Activated naive CD4-positive, alpha-beta T cell treated with anti-CD3 and anti-CD28 coated beads for 36 hours (primary cell): ENCODE measurements at regions of chr6 and their contacts with region 1.

Region 1: GRCh38 chr6:154352898-154353585 is 3.6 kb downstream of the IPCEF1 start:
- DNase-seq: peak; percentile 83
- H3K4me3 Mint-ChIP-seq: no peak overlapping the region
- H3K27ac Mint-ChIP-seq: no peak overlapping the region
- H3K4me1 Mint-ChIP-seq: peaks cover 38% of the 10 kb centered on the region
- H3K27me3 Mint-ChIP-seq: peaks cover 25% of the 10 kb centered on the region

Region 2: GRCh38 chr6:154266560-154267099 is 86.4 kb before region 1 on chr6:
- CTCF ChIA-PET with region 1: no interaction called
- intact Hi-C with region 1: no loop called
- DNase-seq: no peak
- H3K4me3 Mint-ChIP-seq: no peak overlapping the region
- H3K27ac Mint-ChIP-seq: no peak overlapping the region
- H3K4me1 Mint-ChIP-seq: peaks cover 29% of the 10 kb centered on the region
- H3K27me3 Mint-ChIP-seq: no peaks in the 10 kb centered on the region

Region 3: DNA sequence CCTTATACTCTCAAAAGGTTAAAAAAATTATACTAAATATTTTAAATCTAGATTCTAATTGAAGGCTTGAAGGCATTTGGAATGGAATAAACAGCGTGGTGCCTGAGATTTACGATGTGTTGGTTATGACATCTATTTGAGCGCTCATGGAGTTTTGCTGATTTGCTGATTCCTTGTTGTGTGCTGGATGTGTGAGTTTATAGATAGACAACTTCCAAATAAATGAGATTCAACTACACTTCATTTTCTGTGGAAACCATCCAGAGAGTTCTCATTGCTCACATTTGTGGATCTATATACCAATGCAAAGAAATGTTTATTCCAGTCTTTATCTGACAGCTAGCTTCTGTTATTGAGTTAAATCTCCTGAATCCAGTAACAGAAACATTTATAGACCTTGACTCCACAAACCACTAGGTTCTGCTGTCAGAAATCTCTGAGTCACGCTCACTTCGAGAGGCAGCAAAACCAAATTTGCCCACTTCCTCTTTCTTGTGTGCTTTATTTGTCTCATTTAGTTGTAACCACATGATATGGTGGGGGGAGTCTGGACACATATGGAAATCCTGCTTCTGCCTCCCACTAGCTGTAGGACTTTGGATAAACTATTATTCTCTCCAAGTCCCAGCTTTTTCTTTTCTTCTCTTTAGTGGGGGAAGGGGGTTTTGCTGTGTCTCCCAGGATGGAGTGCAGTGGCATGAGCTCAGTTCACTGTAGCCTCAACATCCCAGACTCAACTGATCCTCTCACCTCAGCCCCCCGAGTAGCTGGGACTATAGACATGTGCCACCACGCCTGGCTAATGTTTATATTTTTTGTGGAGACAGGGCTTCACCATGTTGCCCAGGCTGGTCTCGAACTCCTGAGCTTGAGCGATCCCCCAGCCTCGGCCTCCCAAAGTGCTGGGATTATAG is 50.9 kb before region 1 on chr6:
- CTCF ChIA-PET with region 1: no interaction called
- intact Hi-C with region 1: loop called (anchors 1 kb)
- DNase-seq: peak; percentile 56
- H3K4me3 Mint-ChIP-seq: no peak overlapping the region
- H3K27ac Mint-ChIP-seq: no peak overlapping the region
- H3K4me1 Mint-ChIP-seq: peaks cover 8% of the 10 kb centered on the region
- H3K27me3 Mint-ChIP-seq: peaks cover 3% of the 10 kb centered on the region

Region 4: GRCh38 chr6:154410619-154411072 is 57.6 kb after region 1 on chr6:
- CTCF ChIA-PET with region 1: no interaction called
- intact Hi-C with region 1: loop called (anchors 1 kb)
- DNase-seq: peak; percentile 64
- H3K4me3 Mint-ChIP-seq: no peak overlapping the region
- H3K27ac Mint-ChIP-seq: no peak overlapping the region
- H3K4me1 Mint-ChIP-seq: peaks cover 6% of the 10 kb centered on the region
- H3K27me3 Mint-ChIP-seq: peaks cover 2% of the 10 kb centered on the region